Activated CD4-positive, alpha-beta T cell treated with anti-CD3 and anti-CD28 coated beads for 36 hours (primary cell): ENCODE measurements at regions of chr15 and their contacts with region 1.

Region 1: GRCh38 chr15:34209421-34210282 is at the start of gene KATNBL1:
- DNase-seq: peak; percentile 99
- ATAC-seq: peak; percentile 94
- H3K4me3 Mint-ChIP-seq: peak within 1 kb of the TSS; percentile 89
- H3K27ac Mint-ChIP-seq: peak within 1 kb of the TSS; percentile 80
- H3K4me1 Mint-ChIP-seq: peaks cover 32% of the 10 kb centered on the region
- H3K27me3 Mint-ChIP-seq: no peaks in the 10 kb centered on the region
- total RNA-seq, gene KATNBL1: 45.0 to 47.5 TPM

Region 2: DNA sequence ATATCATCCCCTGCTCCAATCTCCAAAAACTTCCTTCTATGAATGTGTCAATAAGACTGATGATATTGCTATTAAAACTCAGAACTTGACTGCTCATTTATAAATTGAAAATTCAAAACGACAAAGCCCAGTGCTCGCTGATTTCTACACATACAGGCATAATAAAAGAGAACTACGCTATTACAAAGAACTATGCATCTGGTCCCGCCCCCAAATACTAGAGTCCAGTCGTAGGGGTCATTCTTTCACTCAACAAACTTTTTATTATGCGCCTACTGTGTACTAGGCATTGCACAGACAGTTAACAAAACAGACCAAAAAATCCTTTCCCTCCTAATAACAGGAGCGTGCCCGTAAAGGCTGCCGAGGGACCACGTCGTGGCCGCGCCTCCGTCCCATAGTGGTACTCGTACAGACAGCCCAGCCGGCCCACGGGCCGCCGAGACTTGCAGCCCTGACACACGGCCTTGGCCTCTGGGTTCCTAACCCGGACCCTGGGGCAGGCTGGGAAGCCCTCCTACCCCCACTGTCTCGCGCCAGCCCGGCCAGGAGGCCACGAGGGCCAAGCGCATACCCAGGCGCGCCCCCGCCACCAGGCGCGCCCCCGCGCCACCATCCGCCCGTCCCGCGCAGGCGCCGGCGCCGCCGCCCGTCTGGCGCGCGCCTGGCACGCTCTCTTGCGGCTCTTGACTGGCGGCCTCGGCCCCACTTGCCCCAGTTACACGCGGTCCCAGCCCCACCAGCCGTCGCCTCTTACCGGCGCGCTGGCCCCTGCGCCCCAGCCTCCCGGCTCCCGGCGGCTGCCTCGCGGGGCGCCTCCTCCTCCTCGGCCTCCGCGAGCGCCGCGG is 171.4 kb before region 1 on chr15:
- CTCF ChIA-PET with region 1: interaction called, 8 read pairs
- POLR2A ChIA-PET with region 1: no interaction called
- intact Hi-C with region 1: loop called in 1 of 2 experiments (anchors 1 kb)
- DNase-seq: peak; percentile 88
- ATAC-seq: peak; percentile 76
- H3K4me3 Mint-ChIP-seq: peak overlapping the region; percentile 81
- H3K27ac Mint-ChIP-seq: peak overlapping the region; percentile 96
- H3K4me1 Mint-ChIP-seq: peaks cover 23% of the 10 kb centered on the region
- H3K27me3 Mint-ChIP-seq: no peaks in the 10 kb centered on the region

Region 3: GRCh38 chr15:34101366-34102175 is 108.1 kb before region 1 on chr15 and contains the starts of genes EMC7 and PGBD4:
- CTCF ChIA-PET with region 1: interaction called, 9 read pairs
- POLR2A ChIA-PET with region 1: interaction called, 5 read pairs
- intact Hi-C with region 1: loop called (anchors 1 to 2 kb)
- DNase-seq: peak; percentile 99
- ATAC-seq: peak; percentile 99
- H3K4me3 Mint-ChIP-seq: peak within 1 kb of the TSS; percentile 100
- H3K27ac Mint-ChIP-seq: peak within 1 kb of the TSS; percentile 99
- H3K4me1 Mint-ChIP-seq: peaks cover 40% of the 10 kb centered on the region
- H3K27me3 Mint-ChIP-seq: no peaks in the 10 kb centered on the region
- total RNA-seq, gene EMC7: 46.7 to 48.5 TPM
- total RNA-seq, gene PGBD4: 2.3 to 2.4 TPM

Region 4: GRCh38 chr15:34223904-34224596 is 14.4 kb after region 1 on chr15:
- CTCF ChIA-PET with region 1: interaction called, 9 read pairs
- POLR2A ChIA-PET with region 1: no interaction called
- intact Hi-C with region 1: loop called (anchors 1 kb)
- DNase-seq: peak; percentile 23
- ATAC-seq: peak; percentile 10
- H3K4me3 Mint-ChIP-seq: peak overlapping the region; percentile 90
- H3K27ac Mint-ChIP-seq: peak overlapping the region; percentile 96
- H3K4me1 Mint-ChIP-seq: peaks cover 17% of the 10 kb centered on the region
- H3K27me3 Mint-ChIP-seq: no peaks in the 10 kb centered on the region

Region 5: DNA sequence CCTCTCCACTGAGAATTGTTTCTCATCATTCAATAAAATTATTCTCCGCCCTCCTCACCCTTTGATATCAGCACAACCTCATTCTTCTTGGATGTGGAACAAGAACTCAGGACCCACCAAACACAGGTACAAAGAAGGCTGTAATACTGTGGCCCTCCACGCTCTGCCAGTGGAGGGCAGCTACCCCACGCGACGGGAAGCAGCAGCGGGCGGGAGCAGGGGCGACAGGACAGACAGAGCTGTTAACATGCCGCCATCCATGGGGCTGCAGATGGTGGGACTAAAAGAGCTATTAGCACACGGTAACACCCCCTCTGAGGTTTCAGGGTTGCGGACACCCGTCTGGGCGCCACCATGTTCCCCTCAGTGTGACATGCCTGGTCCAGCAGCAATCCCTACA is 52.7 kb after region 1 on chr15:
- CTCF ChIA-PET with region 1: no interaction called
- POLR2A ChIA-PET with region 1: no interaction called
- intact Hi-C with region 1: no loop called
- DNase-seq: no peak
- ATAC-seq: no peak
- H3K4me3 Mint-ChIP-seq: no peak overlapping the region
- H3K27ac Mint-ChIP-seq: no peak overlapping the region
- H3K4me1 Mint-ChIP-seq: peaks cover 10% of the 10 kb centered on the region
- H3K27me3 Mint-ChIP-seq: no peaks in the 10 kb centered on the region

Region 6: GRCh38 chr15:34587717-34588674 is 378.3 kb after region 1 on chr15:
- CTCF ChIA-PET with region 1: interaction called, 3 read pairs
- POLR2A ChIA-PET with region 1: no interaction called
- intact Hi-C with region 1: loop called in 1 of 2 experiments (anchors 1 kb)
- DNase-seq: peak; percentile 78
- ATAC-seq: peak; percentile 64
- H3K4me3 Mint-ChIP-seq: peak overlapping the region; percentile 74
- H3K27ac Mint-ChIP-seq: peak overlapping the region; percentile 71
- H3K4me1 Mint-ChIP-seq: peaks cover 6% of the 10 kb centered on the region
- H3K27me3 Mint-ChIP-seq: peaks cover 22% of the 10 kb centered on the region